GM10248 (cell line): ENCODE measurements at regions of chr6 and their contacts with region 1.

Region 1: GRCh38 chr6:51737580-51738360 is 349.6 kb downstream of the PKHD1 start:
- DNase-seq: no peak
- CTCF ChIP-seq: no peak

Region 2: DNA sequence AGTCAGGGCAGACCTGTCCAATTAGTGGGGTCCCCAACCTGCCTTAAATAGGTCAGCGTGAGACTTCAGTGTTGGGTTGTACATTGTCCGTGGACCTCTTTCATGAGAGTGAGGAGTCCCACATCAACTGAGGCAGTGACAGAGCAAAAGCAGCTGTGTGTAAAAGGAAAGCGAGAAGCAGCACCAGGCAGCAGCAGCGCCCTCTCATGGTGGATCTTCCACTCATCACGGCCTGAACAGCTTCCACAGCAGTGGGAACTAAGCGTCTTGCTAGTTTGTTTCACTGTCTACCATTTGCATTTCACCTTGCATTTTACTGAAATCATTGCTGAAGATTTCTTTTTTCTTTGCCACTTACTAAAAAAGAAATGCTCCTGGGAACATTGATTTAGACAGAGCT is 15.9 kb after region 1 on chr6:
- CTCF ChIA-PET with region 1: interaction called, 13 read pairs
- POLR2A ChIA-PET with region 1: no interaction called
- DNase-seq: peak; percentile 10
- CTCF ChIP-seq: peak; percentile 34